Heart right ventricle (tissue), 16 donors: ENCODE measurements at regions of chr5 and their contacts with region 1.

Region 1: DNA sequence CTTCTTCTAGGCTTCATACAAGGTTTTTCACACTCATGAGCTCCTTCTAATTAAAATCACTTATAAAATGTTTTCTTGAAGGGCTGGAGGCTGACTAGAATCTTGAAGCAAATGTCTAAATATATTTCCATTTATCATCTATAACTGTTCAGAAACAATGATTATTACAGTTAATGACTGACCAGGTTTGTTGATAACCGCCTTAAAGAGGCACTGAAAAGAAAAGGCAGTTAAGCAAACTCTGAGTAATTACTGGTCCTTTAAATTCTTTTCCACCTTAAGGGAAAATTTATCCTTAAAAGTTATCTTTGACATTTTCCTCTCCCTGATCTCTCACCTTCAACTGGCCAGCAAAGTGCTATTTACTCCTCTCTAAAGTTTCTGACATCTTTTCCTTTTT is 43.2 kb downstream of the RICTOR start:
- DNase-seq: no peak
- ATAC-seq: no peak
- H3K4me3 ChIP-seq: no peak overlapping the region
- H3K27ac ChIP-seq: no peak overlapping the region
- H3K4me1 ChIP-seq: peaks cover 0 to 41% (median 15%) of the 10 kb centered on the region in 9 donors
- H3K27me3 ChIP-seq: no peaks in the 10 kb centered on the region
- CTCF ChIP-seq: no peak

Region 2: DNA sequence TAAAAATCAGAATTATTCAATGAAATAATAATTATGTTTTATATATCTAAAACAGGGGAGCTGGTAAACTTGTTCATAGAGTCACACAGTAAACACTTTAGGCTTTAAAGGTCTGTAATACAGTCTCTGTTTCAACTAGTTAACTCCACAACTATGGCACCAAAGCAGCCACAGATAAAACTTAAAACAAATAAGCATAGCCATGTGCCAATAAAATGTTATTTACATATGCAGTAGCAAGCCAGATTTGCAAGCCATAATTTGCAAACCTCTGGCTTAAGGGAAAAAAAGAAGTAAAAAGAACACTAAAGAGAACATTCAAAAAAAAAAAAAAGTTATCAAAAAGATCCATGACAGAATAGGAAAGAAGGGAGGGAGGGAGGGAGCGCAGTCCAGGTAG is 18.3 kb after region 1 on chr5:
- intact Hi-C with region 1: loop called in 1 of 10 experiments (anchors 2 kb)
- DNase-seq: no peak
- ATAC-seq: no peak
- H3K4me3 ChIP-seq: no peak overlapping the region
- H3K27ac ChIP-seq: no peak overlapping the region
- H3K4me1 ChIP-seq: peaks cover 0 to 71% (median 30%) of the 10 kb centered on the region in 9 donors
- H3K27me3 ChIP-seq: no peaks in the 10 kb centered on the region
- CTCF ChIP-seq: no peak